ENCODE measurements at regions of chr16 and their contacts with region 1.

Region 1: GRCh38 chr16:96935-97381 is 18.9 kb downstream of the MPG start:
- DNase-seq: peak; percentile 85 to 91 (median 87)
- H3K4me3 ChIP-seq: no peak overlapping the region
- H3K4me3 Mint-ChIP-seq: no peak overlapping the region
- H3K27ac ChIP-seq: no peak overlapping the region
- H3K27ac Mint-ChIP-seq: peak overlapping the region in 2 of 8 donors; percentile 7 to 43
- H3K4me1 ChIP-seq: no peaks in the 10 kb centered on the region
- H3K4me1 Mint-ChIP-seq: peaks cover 3 to 11% (median 7%) of the 10 kb centered on the region in 3 donors
- H3K27me3 ChIP-seq: no peaks in the 10 kb centered on the region
- H3K27me3 Mint-ChIP-seq: peaks cover 0 to 4% of the 10 kb centered on the region in 2 donors

Region 2: DNA sequence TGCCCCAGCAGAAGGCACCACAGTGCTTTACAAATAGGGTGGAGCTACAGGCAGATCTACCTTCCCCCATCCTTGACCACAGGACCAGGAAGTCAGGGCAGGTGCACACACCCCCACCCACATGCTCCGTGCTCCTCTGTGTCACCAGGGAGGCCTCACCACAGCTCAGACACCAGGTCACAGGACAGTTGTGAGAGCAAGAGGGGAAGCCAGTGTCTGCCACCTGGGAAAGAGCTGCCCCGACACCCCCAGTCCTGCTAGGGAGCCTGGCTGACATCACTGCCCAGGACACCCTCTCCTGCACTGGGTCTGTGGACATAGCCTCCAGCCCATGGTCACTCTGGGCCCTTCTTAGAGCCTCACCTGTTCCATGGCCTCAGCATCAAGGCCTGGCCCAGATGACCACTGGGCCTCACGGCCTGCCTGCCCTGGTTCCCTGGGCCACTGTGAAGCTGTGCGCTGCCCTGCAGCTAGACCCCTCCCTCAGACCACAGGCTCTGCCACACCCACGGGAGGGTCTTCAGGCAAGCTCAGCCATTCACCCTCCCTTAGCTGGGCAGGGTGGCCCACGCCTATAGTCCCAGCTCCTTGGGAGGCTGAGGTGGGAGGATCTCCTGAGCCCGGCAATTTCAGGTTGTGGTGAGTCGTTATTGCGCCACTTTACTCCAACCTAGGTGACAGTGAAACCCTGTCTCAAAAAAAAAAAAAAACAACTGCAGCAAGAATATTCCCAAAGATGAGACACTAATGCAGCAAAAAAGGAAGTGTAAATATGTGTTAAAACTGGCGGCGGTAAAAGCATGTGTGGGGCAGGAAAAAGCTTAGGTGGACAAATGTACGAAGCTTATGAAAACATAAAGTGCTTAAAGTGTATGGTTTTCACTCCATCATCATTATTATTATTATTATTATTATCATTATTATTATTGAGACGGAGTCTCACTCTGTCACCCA is 57.7 kb before region 1 on chr16:
- CTCF ChIA-PET with region 1: interaction called, 10 read pairs
- POLR2A ChIA-PET with region 1: no interaction called
- DNase-seq: peak; percentile 32 to 81 (median 52)
- H3K4me3 ChIP-seq: no peak overlapping the region
- H3K4me3 Mint-ChIP-seq: peak overlapping the region in 4 of 7 donors; percentile 15 to 61 (median 43)
- H3K27ac ChIP-seq: peak overlapping the region; percentile 38
- H3K27ac Mint-ChIP-seq: peak overlapping the region; percentile 75 to 92 (median 88)
- H3K4me1 ChIP-seq: peaks cover 12% of the 10 kb centered on the region
- H3K4me1 Mint-ChIP-seq: peaks cover 34 to 49% (median 41%) of the 10 kb centered on the region in 3 donors
- H3K27me3 ChIP-seq: no peaks in the 10 kb centered on the region
- H3K27me3 Mint-ChIP-seq: no peaks in the 10 kb centered on the region

Region 3: DNA sequence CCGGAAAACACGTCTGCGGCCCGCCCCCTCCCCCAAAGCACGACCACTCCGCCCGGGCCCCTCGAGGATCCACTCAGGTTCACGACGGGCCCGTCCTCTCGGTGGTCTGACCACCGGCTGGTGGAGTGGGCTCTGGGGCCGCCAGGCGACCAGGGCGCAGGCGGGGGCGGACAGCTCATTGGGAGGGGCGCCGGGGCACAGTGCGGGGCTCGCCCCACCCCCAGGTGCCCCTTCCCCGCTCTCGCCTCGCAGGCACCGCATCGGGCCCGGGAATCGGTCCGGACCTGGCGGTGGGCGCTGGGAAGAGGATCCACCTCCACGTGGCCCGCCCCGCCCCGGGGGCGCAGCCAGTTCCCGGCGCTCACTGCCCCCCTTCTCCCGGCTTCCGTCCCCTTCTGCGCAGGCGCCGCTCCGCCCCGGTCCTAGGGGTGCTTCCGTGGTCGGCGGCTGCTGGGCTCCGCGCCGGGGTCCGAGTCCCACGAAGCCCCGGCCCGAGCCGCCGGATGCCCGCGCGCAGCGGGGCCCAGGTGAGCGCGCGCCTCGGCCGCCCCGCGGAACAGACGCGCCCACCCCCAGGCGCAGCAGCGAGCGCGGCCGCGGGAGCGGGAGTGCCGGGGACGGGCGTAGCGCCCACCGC is 19.0 kb before region 1 on chr16 and contains the start of gene MPG:
- CTCF ChIA-PET with region 1: interaction called, 59 read pairs
- POLR2A ChIA-PET with region 1: interaction called, 3 read pairs
- DNase-seq: peak; percentile 71 to 88 (median 78)
- H3K4me3 ChIP-seq: peak within 1 kb of the TSS; percentile 85
- H3K4me3 Mint-ChIP-seq: peak within 1 kb of the TSS; percentile 87 to 93 (median 90)
- H3K27ac ChIP-seq: peak within 1 kb of the TSS; percentile 65
- H3K27ac Mint-ChIP-seq: peak within 1 kb of the TSS; percentile 67 to 95 (median 83)
- H3K4me1 ChIP-seq: peaks cover 22% of the 10 kb centered on the region
- H3K4me1 Mint-ChIP-seq: peaks cover 21 to 43% (median 26%) of the 10 kb centered on the region in 3 donors
- H3K27me3 ChIP-seq: peaks cover 14% of the 10 kb centered on the region
- H3K27me3 Mint-ChIP-seq: peaks cover 13 to 15% of the 10 kb centered on the region in 2 donors
- total RNA-seq, gene MPG: 47.5 to 48.2 TPM

Region 4: GRCh38 chr16:84718-85406 is 12.1 kb before region 1 on chr16:
- CTCF ChIA-PET with region 1: interaction called, 25 read pairs
- POLR2A ChIA-PET with region 1: no interaction called
- DNase-seq: peak in 3 of 5 donors; percentile 17 to 58 (median 19)
- H3K4me3 ChIP-seq: no peak overlapping the region
- H3K4me3 Mint-ChIP-seq: peak overlapping the region in 6 of 7 donors; percentile 12 to 69 (median 48)
- H3K27ac ChIP-seq: no peak overlapping the region
- H3K27ac Mint-ChIP-seq: peak overlapping the region in 7 of 8 donors; percentile 2 to 92 (median 78)
- H3K4me1 ChIP-seq: peaks cover 19% of the 10 kb centered on the region
- H3K4me1 Mint-ChIP-seq: peaks cover 24 to 32% (median 24%) of the 10 kb centered on the region in 3 donors
- H3K27me3 ChIP-seq: no peaks in the 10 kb centered on the region
- H3K27me3 Mint-ChIP-seq: peaks cover 0 to 1% of the 10 kb centered on the region in 2 donors

Measured in CD8-positive, alpha-beta memory T cell (primary cell).